Body of pancreas (tissue), 4 donors: ENCODE measurements at regions of chr17 and their contacts with region 1.

Region 1: GRCh38 chr17:17055286-17056155 is 13.3 kb downstream of the MPRIP start:
- DNase-seq: peak in 3 of 4 donors; percentile 5 to 46 (median 37)
- ATAC-seq: peak; percentile 66
- H3K4me3 ChIP-seq: no peak overlapping the region
- H3K27ac ChIP-seq: peak overlapping the region; percentile 69 to 73 (median 72)
- H3K4me1 ChIP-seq: peaks cover 85% of the 10 kb centered on the region
- H3K27me3 ChIP-seq: no peaks in the 10 kb centered on the region
- CTCF ChIP-seq: peak in 4 of 7 experiments; percentile 18 to 38 (median 22)
- POLR2A ChIP-seq: no peak

Region 2: GRCh38 chr17:16915752-16916556 is 139.6 kb before region 1 on chr17:
- intact Hi-C with region 1: no loop called
- DNase-seq: peak; percentile 66 to 85 (median 77)
- ATAC-seq: peak; percentile 62
- H3K4me3 ChIP-seq: no peak overlapping the region
- H3K27ac ChIP-seq: no peak overlapping the region
- H3K4me1 ChIP-seq: no peaks in the 10 kb centered on the region
- H3K27me3 ChIP-seq: no peaks in the 10 kb centered on the region
- CTCF ChIP-seq: peak; percentile 20 to 53 (median 40)
- POLR2A ChIP-seq: no peak

Region 3: DNA sequence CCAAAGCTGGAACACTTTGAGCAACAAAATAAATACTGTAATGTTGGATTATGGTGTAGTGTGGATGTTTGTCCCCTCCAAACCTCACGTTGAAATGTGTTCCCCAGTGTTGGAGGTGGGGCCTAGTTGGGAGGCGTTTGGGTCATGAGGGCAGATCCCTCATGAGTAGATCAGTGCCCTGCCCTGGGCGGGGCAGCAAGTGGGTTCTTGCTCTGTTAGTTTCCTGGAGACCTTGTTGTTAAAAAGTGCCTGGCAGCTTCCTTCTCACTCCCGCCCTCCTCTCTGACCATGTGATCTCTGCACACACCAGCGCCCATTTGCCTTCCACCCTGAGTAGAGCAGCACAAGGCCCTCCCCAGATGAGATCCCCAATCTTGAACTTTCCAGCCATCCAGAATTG is 54.4 kb after region 1 on chr17:
- intact Hi-C with region 1: loop called (anchors 5 kb)
- DNase-seq: no peak
- ATAC-seq: no peak
- H3K4me3 ChIP-seq: no peak overlapping the region
- H3K27ac ChIP-seq: peak overlapping the region in 1 of 4 donors; percentile 7
- H3K4me1 ChIP-seq: peaks cover 69% of the 10 kb centered on the region
- H3K27me3 ChIP-seq: no peaks in the 10 kb centered on the region
- CTCF ChIP-seq: no peak
- POLR2A ChIP-seq: no peak